OCI-LY7 (cell line): ENCODE measurements at regions of chr4 and their contacts with region 1.

Region 1: GRCh38 chr4:41281038-41281634 is 24.4 kb downstream of the UCHL1 start:
- DNase-seq: peak; percentile 80
- H3K4me3 ChIP-seq: no peak overlapping the region
- H3K27ac ChIP-seq: no peak overlapping the region
- H3K4me1 ChIP-seq: no peaks in the 10 kb centered on the region
- CTCF ChIP-seq: peak; percentile 96

Region 2: DNA sequence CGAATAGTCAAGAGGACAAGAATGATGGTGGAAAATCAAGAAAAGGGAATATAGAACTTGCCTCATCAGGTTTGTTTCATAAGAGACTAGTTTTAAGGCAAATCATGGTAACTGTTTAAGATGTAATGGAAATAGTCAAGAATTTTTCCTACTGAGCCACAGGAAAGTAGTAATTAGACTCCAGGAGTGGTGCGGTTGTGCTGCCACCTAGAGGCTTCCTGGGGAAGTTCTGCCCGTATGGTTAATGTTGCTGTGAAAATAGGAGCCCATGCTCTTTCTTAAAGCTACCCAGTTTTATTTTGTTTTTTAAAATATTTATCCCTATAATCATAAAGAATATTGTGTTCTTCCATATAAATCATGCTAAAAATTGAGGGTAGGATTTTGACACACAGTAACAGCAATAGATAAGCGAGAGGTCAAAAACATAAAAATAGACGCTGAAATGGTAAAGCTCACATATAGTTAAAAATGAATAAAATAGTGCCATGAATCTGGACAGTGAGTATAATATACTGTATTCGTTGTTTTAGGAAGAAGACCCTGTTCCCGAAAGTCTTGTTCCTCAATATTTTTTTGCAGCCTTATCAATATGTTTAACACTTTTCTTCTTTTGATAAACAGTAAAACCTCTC is 380.4 kb after region 1 on chr4:
- CTCF ChIA-PET with region 1: no interaction called
- POLR2A ChIA-PET with region 1: no interaction called
- intact Hi-C with region 1: loop called (anchors 1 kb)
- DNase-seq: peak; percentile 46
- H3K4me3 ChIP-seq: no peak overlapping the region
- H3K27ac ChIP-seq: no peak overlapping the region
- H3K4me1 ChIP-seq: no peaks in the 10 kb centered on the region
- CTCF ChIP-seq: peak; percentile 99

Region 3: GRCh38 chr4:41882625-41883347 is 601.6 kb after region 1 on chr4:
- CTCF ChIA-PET with region 1: no interaction called
- POLR2A ChIA-PET with region 1: no interaction called
- intact Hi-C with region 1: loop called (anchors 2 kb)
- DNase-seq: peak; percentile 40
- H3K4me3 ChIP-seq: no peak overlapping the region
- H3K27ac ChIP-seq: no peak overlapping the region
- H3K4me1 ChIP-seq: no peaks in the 10 kb centered on the region
- CTCF ChIP-seq: peak; percentile 95